Right ventricle myocardium superior (tissue), 1 donor: ENCODE measurements at regions of chr16 and their contacts with region 1.

Region 1: GRCh38 chr16:29926005-29926710 is at the start of gene KCTD13:
- DNase-seq: peak; percentile 91
- ATAC-seq: peak; percentile 99
- total RNA-seq, gene KCTD13: 6.6 TPM

Region 2: DNA sequence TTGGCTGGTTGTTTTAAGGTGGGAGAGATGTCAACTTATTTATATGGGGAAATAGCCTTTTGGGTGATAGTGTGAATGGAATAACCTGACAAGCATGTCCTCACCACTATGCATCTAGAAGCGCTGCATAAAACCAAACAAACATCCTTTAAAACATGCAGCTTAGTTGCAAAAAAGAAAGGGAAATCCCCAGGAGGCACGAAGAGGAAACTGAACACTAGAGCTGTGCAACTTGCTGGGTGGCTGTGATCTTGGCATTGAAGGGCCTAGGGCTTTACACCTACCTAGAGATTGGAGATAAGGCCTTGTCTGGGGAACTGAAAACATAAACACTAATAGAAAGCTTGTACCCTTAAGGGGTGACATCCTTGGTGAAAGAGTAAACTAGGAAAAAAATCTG is 187.6 kb before region 1 on chr16:
- intact Hi-C with region 1: no loop called
- DNase-seq: no peak
- ATAC-seq: no peak

Region 3: GRCh38 chr16:29877266-29877961 is 48.7 kb before region 1 on chr16:
- intact Hi-C with region 1: loop called (anchors 10 kb)
- DNase-seq: no peak
- ATAC-seq: no peak

Region 4: GRCh38 chr16:29961479-29962343 is 35.6 kb after region 1 on chr16 and contains the start of gene TMEM219:
- intact Hi-C with region 1: loop called (anchors 2 kb)
- DNase-seq: peak; percentile 96
- ATAC-seq: peak; percentile 99
- total RNA-seq, gene TMEM219: 70.6 TPM

Region 5: GRCh38 chr16:30005341-30006094 is 79.4 kb after region 1 on chr16:
- intact Hi-C with region 1: loop called (anchors 5 kb)
- DNase-seq: no peak
- ATAC-seq: peak; percentile 62

Region 6: DNA sequence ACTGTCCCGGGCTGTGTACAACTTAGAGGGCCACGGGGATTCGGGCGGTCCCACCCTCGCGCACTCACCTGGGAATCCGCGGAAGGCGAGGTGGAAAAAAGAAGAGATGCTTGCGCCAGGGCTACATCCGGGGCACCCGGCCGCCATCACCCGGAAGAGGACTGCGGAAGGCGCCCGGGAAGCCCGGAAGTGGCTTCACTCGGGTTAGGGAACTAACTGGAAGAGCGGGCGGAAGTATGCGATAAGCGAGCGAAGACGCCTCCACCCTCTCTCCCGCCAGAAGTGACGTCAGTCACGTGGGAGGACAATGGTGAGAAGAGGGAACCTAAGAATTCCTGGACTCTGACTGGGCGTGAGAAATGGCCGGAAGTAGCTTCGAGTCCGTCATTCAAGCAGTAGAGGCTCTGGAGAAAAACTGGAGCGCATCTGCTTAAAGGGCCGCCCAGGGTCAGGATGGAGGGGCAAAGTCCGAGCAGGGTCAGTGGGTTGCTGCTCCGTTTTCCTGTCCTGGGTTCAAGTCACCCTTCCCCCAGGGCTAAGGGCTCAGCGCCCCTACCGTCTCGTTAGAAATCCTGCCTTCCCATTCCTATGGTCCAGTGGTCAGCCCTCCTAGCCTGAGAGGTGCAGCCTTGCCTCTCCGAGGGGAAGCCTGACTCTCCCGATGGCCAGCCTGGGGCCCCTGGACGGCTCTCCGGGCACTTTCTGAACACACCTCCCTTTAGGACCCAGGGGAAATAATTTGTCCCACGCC is 429.2 kb after region 1 on chr16 and contains the start of gene CD2BP2:
- intact Hi-C with region 1: no loop called
- DNase-seq: peak; percentile 97
- ATAC-seq: peak; percentile 92
- total RNA-seq, gene CD2BP2: 34.1 TPM